Right ventricle myocardium superior (tissue), 1 donor: ENCODE measurements at regions of chr18 and their contacts with region 1.

Region 1: DNA sequence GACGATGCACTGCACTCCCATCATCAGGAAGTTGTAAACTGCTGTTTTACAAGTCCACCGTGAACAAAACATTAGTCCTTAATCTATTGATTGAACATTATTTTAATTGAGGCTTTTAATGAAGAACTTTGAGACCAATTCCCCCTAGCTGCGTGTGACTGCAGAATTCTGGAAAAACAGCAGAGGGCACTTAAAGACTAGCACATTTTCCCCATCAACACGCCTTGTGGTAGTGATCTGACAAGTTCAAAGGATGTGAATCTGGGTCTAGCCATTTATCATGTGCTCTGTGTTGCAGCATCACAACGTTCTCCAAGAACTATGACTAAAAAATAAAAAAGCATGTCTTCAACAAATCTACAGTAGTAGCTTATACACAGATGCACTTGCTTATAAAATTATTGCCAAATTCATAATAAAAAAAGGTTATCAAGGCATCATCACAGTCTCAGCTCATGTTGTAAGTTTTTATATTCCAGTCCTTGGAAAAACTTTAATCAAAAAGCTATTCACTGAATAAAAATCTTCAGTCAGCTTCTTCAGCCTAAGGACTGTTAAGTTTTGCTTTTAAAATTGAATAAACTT is 35.8 kb downstream of the SKOR2 start:
- DNase-seq: no peak
- ATAC-seq: no peak

Region 2: GRCh38 chr18:47748847-47749599 is 533.4 kb after region 1 on chr18:
- intact Hi-C with region 1: loop called (anchors 5 kb)
- DNase-seq: peak; percentile 90
- ATAC-seq: peak; percentile 99